ENCODE measurements at regions of chr1 and their contacts with region 1.

Region 1: GRCh38 chr1:77683160-77684148 is 996 bp upstream of the ZZZ3 start:
- DNase-seq: peak; percentile 96
- ATAC-seq: peak; percentile 91

Region 2: GRCh38 chr1:77219166-77219887 is 464.1 kb before region 1 on chr1 and contains the start of gene PIGK:
- intact Hi-C with region 1: loop called (anchors 10 kb)
- DNase-seq: peak; percentile 91
- ATAC-seq: peak; percentile 99
- total RNA-seq, gene PIGK: 29.4 TPM

Region 3: GRCh38 chr1:77533660-77534305 is 149.7 kb before region 1 on chr1:
- intact Hi-C with region 1: loop called (anchors 10 kb)
- DNase-seq: peak; percentile 68
- ATAC-seq: peak; percentile 56

Region 4: DNA sequence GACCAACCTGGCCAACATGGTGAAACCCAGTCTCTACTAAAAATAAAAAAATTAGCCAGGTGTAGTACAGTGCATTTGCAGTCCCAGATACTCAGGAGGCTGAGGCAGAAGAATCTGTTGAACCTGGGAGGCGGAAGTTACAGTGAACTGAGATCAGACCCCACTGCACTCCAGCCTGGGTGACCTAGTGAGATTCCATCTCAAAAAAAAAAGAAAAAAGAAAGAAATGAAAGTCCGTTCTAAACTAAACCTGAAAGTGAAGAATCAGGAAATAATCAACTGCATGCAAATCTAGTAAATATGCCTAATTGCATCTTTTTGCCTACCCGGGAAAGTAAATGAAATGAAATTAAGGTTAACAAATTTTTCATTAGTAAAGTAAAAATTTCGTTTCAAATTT is 100.5 kb before region 1 on chr1:
- intact Hi-C with region 1: loop called (anchors 10 kb)
- DNase-seq: no peak
- ATAC-seq: no peak

Measured in Right ventricle myocardium inferior (tissue), 1 donor.